Caco-2 (cell line): ENCODE measurements at regions of chr14 and their contacts with region 1.

Region 1: DNA sequence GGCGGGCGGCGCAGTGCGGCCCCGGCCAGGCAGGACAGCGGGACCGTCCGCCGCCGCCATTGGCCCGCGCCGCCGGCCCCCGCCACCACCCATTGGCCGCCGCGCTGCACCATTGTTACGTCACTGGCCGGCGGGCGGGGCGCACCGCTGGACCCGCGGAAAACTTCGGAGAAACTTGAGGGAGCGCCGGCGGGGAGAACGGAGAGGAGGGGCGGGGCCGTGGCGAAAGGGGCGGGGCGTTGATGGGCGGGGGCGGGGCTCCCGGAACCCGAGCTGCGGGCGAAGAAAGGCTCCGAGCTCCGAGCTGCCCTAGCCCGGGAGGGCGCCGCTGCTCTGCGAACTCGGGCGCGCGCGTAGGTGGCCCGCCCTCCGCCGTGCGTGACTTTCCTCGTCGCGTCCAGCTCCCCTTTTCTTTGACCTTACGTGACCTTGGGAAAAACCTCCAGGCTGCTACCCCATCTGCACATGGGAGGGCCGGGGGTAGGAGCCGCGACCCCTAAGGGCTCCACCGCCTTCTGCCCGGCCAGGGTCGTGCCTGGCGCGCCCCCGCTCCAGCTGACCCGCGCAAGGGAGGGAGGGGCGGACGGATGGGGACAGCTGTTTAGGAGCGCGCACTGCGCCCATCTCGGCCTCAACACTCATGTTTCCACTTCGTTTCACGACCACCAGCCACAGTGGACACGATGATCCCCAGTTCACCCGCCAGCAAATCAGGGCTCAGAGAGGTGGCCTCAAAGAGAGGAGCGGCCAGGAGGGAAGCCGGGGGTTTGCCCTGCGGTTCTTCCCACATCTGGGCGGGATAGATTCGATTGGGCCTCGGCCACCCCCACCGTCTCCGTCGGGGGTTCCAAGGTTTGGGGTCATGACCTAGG is at the start of gene ANKRD9:
- DNase-seq: peak; percentile 93 to 96
- H3K4me3 ChIP-seq: peak within 1 kb of the TSS; percentile 64
- H3K4me3 Mint-ChIP-seq: peak within 1 kb of the TSS; percentile 90
- H3K27ac Mint-ChIP-seq: peak within 1 kb of the TSS; percentile 66
- H3K4me1 ChIP-seq: peaks cover 24% of the 10 kb centered on the region
- H3K4me1 Mint-ChIP-seq: no peaks in the 10 kb centered on the region
- H3K27me3 ChIP-seq: no peaks in the 10 kb centered on the region
- H3K27me3 Mint-ChIP-seq: no peaks in the 10 kb centered on the region
- CTCF ChIP-seq: no peak
- total RNA-seq, gene ANKRD9: 15.0 and 15.5 TPM in 2 replicates

Region 2: GRCh38 chr14:102285116-102285515 is 224.9 kb before region 1 on chr14:
- CTCF ChIA-PET with region 1: no interaction called
- POLR2A ChIA-PET with region 1: no interaction called
- intact Hi-C with region 1: no loop called
- DNase-seq: no peak
- H3K4me3 ChIP-seq: no peak overlapping the region
- H3K4me3 Mint-ChIP-seq: no peak overlapping the region
- H3K27ac Mint-ChIP-seq: no peak overlapping the region
- H3K4me1 ChIP-seq: peaks cover 4% of the 10 kb centered on the region; the same call in 1 of the 2 replicates
- H3K4me1 Mint-ChIP-seq: no peaks in the 10 kb centered on the region
- H3K27me3 ChIP-seq: no peaks in the 10 kb centered on the region
- H3K27me3 Mint-ChIP-seq: no peaks in the 10 kb centered on the region
- CTCF ChIP-seq: no peak

Region 3: GRCh38 chr14:102390064-102390855 is 119.7 kb before region 1 on chr14:
- CTCF ChIA-PET with region 1: no interaction called
- POLR2A ChIA-PET with region 1: no interaction called
- intact Hi-C with region 1: no loop called
- DNase-seq: no peak
- H3K4me3 ChIP-seq: no peak overlapping the region
- H3K4me3 Mint-ChIP-seq: no peak overlapping the region
- H3K27ac Mint-ChIP-seq: no peak overlapping the region
- H3K4me1 ChIP-seq: no peaks in the 10 kb centered on the region
- H3K4me1 Mint-ChIP-seq: no peaks in the 10 kb centered on the region
- H3K27me3 ChIP-seq: no peaks in the 10 kb centered on the region
- H3K27me3 Mint-ChIP-seq: no peaks in the 10 kb centered on the region
- CTCF ChIP-seq: no peak

Region 4: GRCh38 chr14:102437997-102438915 is 71.7 kb before region 1 on chr14:
- CTCF ChIA-PET with region 1: interaction called, 8 read pairs
- POLR2A ChIA-PET with region 1: no interaction called
- intact Hi-C with region 1: loop called (anchors 2 kb)
- DNase-seq: peak; percentile 85 to 89
- H3K4me3 ChIP-seq: no peak overlapping the region; the same call in 1 of the 2 replicates
- H3K4me3 Mint-ChIP-seq: peak overlapping the region; percentile 28
- H3K27ac Mint-ChIP-seq: no peak overlapping the region
- H3K4me1 ChIP-seq: no peaks in the 10 kb centered on the region
- H3K4me1 Mint-ChIP-seq: no peaks in the 10 kb centered on the region
- H3K27me3 ChIP-seq: no peaks in the 10 kb centered on the region
- H3K27me3 Mint-ChIP-seq: no peaks in the 10 kb centered on the region
- CTCF ChIP-seq: peak; percentile 77 to 84

Region 5: GRCh38 chr14:102464831-102465580 is 45.0 kb before region 1 on chr14:
- CTCF ChIA-PET with region 1: interaction called, 3 read pairs
- POLR2A ChIA-PET with region 1: no interaction called
- intact Hi-C with region 1: loop called (anchors 5 kb)
- DNase-seq: peak; percentile 59 to 72
- H3K4me3 ChIP-seq: no peak overlapping the region
- H3K4me3 Mint-ChIP-seq: no peak overlapping the region
- H3K27ac Mint-ChIP-seq: no peak overlapping the region
- H3K4me1 ChIP-seq: peaks cover 9% of the 10 kb centered on the region; the same call in 1 of the 2 replicates
- H3K4me1 Mint-ChIP-seq: peaks cover 12% of the 10 kb centered on the region
- H3K27me3 ChIP-seq: no peaks in the 10 kb centered on the region
- H3K27me3 Mint-ChIP-seq: no peaks in the 10 kb centered on the region
- CTCF ChIP-seq: no peak